ENCODE measurements at regions of chr17 and their contacts with region 1.

Region 1: GRCh38 chr17:6104956-6105648 is 34.9 kb downstream of the WSCD1 start:
- DNase-seq: peak; percentile 72
- H3K4me3 ChIP-seq: no peak overlapping the region
- H3K27ac ChIP-seq: peak overlapping the region in 3 of 4 donors; percentile 44 to 67 (median 64)
- H3K4me1 ChIP-seq: peaks cover 5 to 50% (median 26%) of the 10 kb centered on the region in 4 donors
- H3K27me3 ChIP-seq: no peaks in the 10 kb centered on the region
- CTCF ChIP-seq: no peak
- EP300 ChIP-seq: no peak
- POLR2A ChIP-seq: no peak

Region 2: GRCh38 chr17:5986644-5987043 is 118.5 kb before region 1 on chr17:
- in situ Hi-C with region 1: no loop called
- intact Hi-C with region 1: no loop called
- DNase-seq: no peak
- H3K4me3 ChIP-seq: no peak overlapping the region
- H3K27ac ChIP-seq: no peak overlapping the region
- H3K4me1 ChIP-seq: no peaks in the 10 kb centered on the region
- H3K27me3 ChIP-seq: no peaks in the 10 kb centered on the region
- CTCF ChIP-seq: no peak
- EP300 ChIP-seq: no peak
- POLR2A ChIP-seq: no peak

Region 3: GRCh38 chr17:6241996-6242395 is 136.9 kb after region 1 on chr17:
- in situ Hi-C with region 1: no loop called
- intact Hi-C with region 1: loop called (anchors 10 kb)
- DNase-seq: no peak
- H3K4me3 ChIP-seq: no peak overlapping the region
- H3K27ac ChIP-seq: no peak overlapping the region
- H3K4me1 ChIP-seq: no peaks in the 10 kb centered on the region
- H3K27me3 ChIP-seq: no peaks in the 10 kb centered on the region
- CTCF ChIP-seq: no peak
- EP300 ChIP-seq: no peak
- POLR2A ChIP-seq: no peak